ENCODE measurements at regions of chr9 and their contacts with region 1.

Region 1: GRCh38 chr9:108565651-108566378 is 290.0 kb downstream of the ACTL7B start:
- DNase-seq: peak in 1 of 2 experiments; percentile 63
- H3K4me3 ChIP-seq: no peak overlapping the region
- H3K4me3 Mint-ChIP-seq: no peak overlapping the region
- H3K27ac Mint-ChIP-seq: no peak overlapping the region
- H3K4me1 ChIP-seq: no peaks in the 10 kb centered on the region
- H3K4me1 Mint-ChIP-seq: no peaks in the 10 kb centered on the region
- H3K27me3 ChIP-seq: no peaks in the 10 kb centered on the region
- H3K27me3 Mint-ChIP-seq: peaks cover 6% of the 10 kb centered on the region
- CTCF ChIP-seq: peak; percentile 70 to 85

Region 2: GRCh38 chr9:107421947-107422793 is 1143.6 kb before region 1 on chr9:
- CTCF ChIA-PET with region 1: no interaction called
- POLR2A ChIA-PET with region 1: no interaction called
- intact Hi-C with region 1: loop called (anchors 1 kb)
- DNase-seq: peak; percentile 84 to 87
- H3K4me3 ChIP-seq: no peak overlapping the region
- H3K4me3 Mint-ChIP-seq: no peak overlapping the region
- H3K27ac Mint-ChIP-seq: no peak overlapping the region
- H3K4me1 ChIP-seq: no peaks in the 10 kb centered on the region
- H3K4me1 Mint-ChIP-seq: no peaks in the 10 kb centered on the region
- H3K27me3 ChIP-seq: no peaks in the 10 kb centered on the region
- H3K27me3 Mint-ChIP-seq: no peaks in the 10 kb centered on the region
- CTCF ChIP-seq: peak; percentile 80 to 87

Region 3: DNA sequence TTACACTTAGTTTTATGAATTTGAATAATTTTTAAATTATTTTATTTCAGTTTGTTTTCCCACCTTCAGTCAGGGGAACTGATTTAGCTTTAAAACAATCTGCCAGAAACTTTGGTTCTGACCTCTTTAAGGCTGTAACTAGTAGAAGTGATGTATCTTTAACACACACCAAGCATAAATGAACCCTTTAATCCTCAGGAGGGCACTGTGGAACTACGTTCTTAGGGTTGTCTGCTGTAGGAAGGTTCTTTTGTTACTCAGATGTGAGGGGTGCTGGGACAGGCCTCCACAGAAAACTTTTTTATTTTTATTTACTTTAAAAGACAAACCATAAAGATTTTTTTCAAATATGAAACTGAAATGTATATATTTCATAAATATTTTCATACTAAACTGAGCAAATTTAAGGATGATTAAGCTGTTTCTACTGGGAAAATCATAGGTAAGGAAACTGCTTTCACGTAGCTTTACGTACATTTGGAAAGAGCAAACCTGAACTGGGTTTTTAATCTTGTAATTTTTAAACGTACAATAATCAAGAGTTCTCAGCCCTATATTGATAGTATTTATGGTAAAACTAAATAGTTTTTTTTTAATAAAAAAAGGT is 1081.6 kb before region 1 on chr9:
- CTCF ChIA-PET with region 1: interaction called, 10 read pairs
- POLR2A ChIA-PET with region 1: no interaction called
- intact Hi-C with region 1: loop called (anchors 1 kb)
- DNase-seq: peak; percentile 52 to 65
- H3K4me3 ChIP-seq: no peak overlapping the region
- H3K4me3 Mint-ChIP-seq: no peak overlapping the region
- H3K27ac Mint-ChIP-seq: no peak overlapping the region
- H3K4me1 ChIP-seq: no peaks in the 10 kb centered on the region
- H3K4me1 Mint-ChIP-seq: no peaks in the 10 kb centered on the region
- H3K27me3 ChIP-seq: no peaks in the 10 kb centered on the region
- H3K27me3 Mint-ChIP-seq: no peaks in the 10 kb centered on the region
- CTCF ChIP-seq: peak; percentile 55 to 61

Region 4: DNA sequence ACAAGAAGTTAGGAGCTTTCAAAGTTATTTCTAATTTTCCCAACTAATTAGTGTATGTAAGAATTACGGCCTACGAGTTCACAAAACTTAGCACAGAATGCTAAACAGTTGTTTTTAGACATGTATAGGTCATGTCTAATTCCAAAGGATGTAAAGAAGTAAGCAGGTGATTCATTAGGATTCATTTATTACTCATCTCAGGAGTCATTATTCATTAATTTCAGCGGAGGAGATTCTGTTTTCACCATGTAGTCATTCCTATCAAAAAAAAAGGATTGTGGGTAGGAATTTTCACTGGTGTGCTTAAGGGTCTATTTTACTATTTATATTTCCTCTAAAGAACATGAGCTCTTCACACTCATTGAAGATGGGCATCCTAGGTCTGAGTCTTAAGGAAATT is 242.2 kb before region 1 on chr9:
- CTCF ChIA-PET with region 1: no interaction called
- POLR2A ChIA-PET with region 1: no interaction called
- intact Hi-C with region 1: no loop called
- DNase-seq: no peak
- H3K4me3 ChIP-seq: no peak overlapping the region
- H3K4me3 Mint-ChIP-seq: no peak overlapping the region
- H3K27ac Mint-ChIP-seq: no peak overlapping the region
- H3K4me1 ChIP-seq: no peaks in the 10 kb centered on the region
- H3K4me1 Mint-ChIP-seq: no peaks in the 10 kb centered on the region
- H3K27me3 ChIP-seq: no peaks in the 10 kb centered on the region
- H3K27me3 Mint-ChIP-seq: no peaks in the 10 kb centered on the region
- CTCF ChIP-seq: no peak

Region 5: DNA sequence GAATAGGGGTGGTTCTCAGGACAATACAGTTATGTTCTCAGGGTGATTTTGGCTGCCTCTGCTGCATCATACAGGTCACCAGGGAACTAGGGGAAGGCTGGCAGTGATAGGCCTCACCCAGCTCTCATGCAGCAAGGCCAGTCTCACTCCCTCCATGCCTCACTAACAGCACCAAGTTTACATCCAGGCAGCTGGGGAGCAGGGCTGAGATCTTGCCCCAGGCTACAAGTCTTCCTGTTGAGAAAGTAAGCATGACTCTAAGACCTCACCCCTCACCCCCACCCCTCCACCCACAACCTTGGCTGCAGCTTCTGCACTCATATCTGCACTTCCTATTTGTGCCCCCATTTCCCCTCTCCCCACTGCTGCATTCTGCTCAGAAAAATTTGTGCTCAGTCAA is 191.2 kb before region 1 on chr9:
- CTCF ChIA-PET with region 1: no interaction called
- POLR2A ChIA-PET with region 1: no interaction called
- intact Hi-C with region 1: no loop called
- DNase-seq: no peak
- H3K4me3 ChIP-seq: no peak overlapping the region
- H3K4me3 Mint-ChIP-seq: no peak overlapping the region
- H3K27ac Mint-ChIP-seq: no peak overlapping the region
- H3K4me1 ChIP-seq: peaks cover 20% of the 10 kb centered on the region
- H3K4me1 Mint-ChIP-seq: no peaks in the 10 kb centered on the region
- H3K27me3 ChIP-seq: no peaks in the 10 kb centered on the region
- H3K27me3 Mint-ChIP-seq: peaks cover 5% of the 10 kb centered on the region
- CTCF ChIP-seq: no peak

Region 6: GRCh38 chr9:108412755-108413154 is 153.1 kb before region 1 on chr9:
- CTCF ChIA-PET with region 1: interaction called, 10 read pairs
- POLR2A ChIA-PET with region 1: no interaction called
- intact Hi-C with region 1: loop called (anchors 1 kb)
- DNase-seq: peak; percentile 36 to 51
- H3K4me3 ChIP-seq: no peak overlapping the region
- H3K4me3 Mint-ChIP-seq: no peak overlapping the region
- H3K27ac Mint-ChIP-seq: no peak overlapping the region
- H3K4me1 ChIP-seq: no peaks in the 10 kb centered on the region
- H3K4me1 Mint-ChIP-seq: no peaks in the 10 kb centered on the region
- H3K27me3 ChIP-seq: no peaks in the 10 kb centered on the region
- H3K27me3 Mint-ChIP-seq: no peaks in the 10 kb centered on the region
- CTCF ChIP-seq: no peak

Region 7: DNA sequence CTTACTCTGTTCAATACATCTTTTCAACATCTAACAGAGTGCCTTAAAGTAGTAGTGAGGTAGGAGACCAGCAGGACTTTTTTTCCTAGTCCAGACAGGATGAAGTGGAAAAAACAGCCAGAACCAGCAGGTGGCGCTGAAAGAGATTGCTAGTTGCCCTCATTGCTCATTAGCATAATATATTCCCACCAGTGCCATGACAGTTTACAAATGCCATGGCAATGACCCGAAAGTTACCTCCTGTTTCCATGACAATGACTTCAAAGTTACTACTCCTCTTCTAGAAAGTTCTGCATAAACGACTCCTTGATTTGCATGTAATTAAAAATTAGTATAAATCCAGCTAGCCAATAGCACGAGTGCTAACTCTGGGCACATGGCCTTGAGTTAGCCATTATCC is 97.4 kb before region 1 on chr9:
- CTCF ChIA-PET with region 1: interaction called, 4 read pairs
- POLR2A ChIA-PET with region 1: no interaction called
- intact Hi-C with region 1: loop called (anchors 1 kb)
- DNase-seq: peak in 1 of 2 experiments; percentile 55
- H3K4me3 ChIP-seq: no peak overlapping the region
- H3K4me3 Mint-ChIP-seq: no peak overlapping the region
- H3K27ac Mint-ChIP-seq: no peak overlapping the region
- H3K4me1 ChIP-seq: no peaks in the 10 kb centered on the region
- H3K4me1 Mint-ChIP-seq: peaks cover 7% of the 10 kb centered on the region
- H3K27me3 ChIP-seq: no peaks in the 10 kb centered on the region; the same call in 1 of the 2 replicates
- H3K27me3 Mint-ChIP-seq: peaks cover 5% of the 10 kb centered on the region
- CTCF ChIP-seq: peak; percentile 44 to 64

Region 8: DNA sequence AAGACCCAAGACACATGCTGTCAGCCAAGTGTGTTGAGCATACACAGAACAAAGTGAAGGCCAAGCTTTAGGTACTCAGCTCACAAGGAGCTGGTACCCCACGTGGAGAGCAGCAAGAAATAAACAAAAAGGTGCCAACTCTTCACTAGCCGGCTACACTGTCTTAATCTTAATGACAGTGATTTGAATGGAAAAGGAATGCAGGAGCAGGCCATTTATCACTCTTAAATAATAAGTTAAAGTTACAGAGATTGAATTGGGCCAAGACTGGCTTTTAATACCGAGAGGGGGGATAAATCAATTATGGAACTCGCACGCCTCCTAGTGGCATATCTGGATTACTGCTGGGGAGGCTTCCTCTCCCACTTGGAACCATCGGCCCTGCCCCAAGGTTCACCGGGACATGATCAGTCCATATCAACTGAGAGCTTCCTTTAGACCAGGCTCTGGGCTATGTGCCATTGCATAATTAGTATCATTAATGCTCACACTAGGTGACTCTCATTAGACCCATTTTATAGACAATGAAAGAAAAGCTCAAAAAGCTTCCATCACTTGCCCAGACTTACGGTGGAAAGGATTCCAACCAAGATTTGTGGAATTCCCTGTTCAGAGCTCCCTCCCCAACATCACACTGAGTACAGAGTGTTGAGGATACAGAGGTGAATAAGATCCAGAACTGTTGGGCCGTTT is 196.0 kb after region 1 on chr9:
- CTCF ChIA-PET with region 1: no interaction called
- POLR2A ChIA-PET with region 1: no interaction called
- intact Hi-C with region 1: loop called (anchors 5 kb)
- DNase-seq: peak; percentile 48 to 57
- H3K4me3 ChIP-seq: no peak overlapping the region
- H3K4me3 Mint-ChIP-seq: no peak overlapping the region
- H3K27ac Mint-ChIP-seq: no peak overlapping the region
- H3K4me1 ChIP-seq: no peaks in the 10 kb centered on the region
- H3K4me1 Mint-ChIP-seq: no peaks in the 10 kb centered on the region
- H3K27me3 ChIP-seq: no peaks in the 10 kb centered on the region
- H3K27me3 Mint-ChIP-seq: peaks cover 10% of the 10 kb centered on the region
- CTCF ChIP-seq: peak; percentile 63 to 90

Region 9: GRCh38 chr9:108953983-108954574 is 388.3 kb after region 1 on chr9:
- CTCF ChIA-PET with region 1: no interaction called
- POLR2A ChIA-PET with region 1: no interaction called
- intact Hi-C with region 1: loop called (anchors 5 kb)
- DNase-seq: peak in 1 of 2 experiments; percentile 15
- H3K4me3 ChIP-seq: no peak overlapping the region
- H3K4me3 Mint-ChIP-seq: no peak overlapping the region
- H3K27ac Mint-ChIP-seq: no peak overlapping the region
- H3K4me1 ChIP-seq: no peaks in the 10 kb centered on the region
- H3K4me1 Mint-ChIP-seq: no peaks in the 10 kb centered on the region
- H3K27me3 ChIP-seq: no peaks in the 10 kb centered on the region
- H3K27me3 Mint-ChIP-seq: no peaks in the 10 kb centered on the region
- CTCF ChIP-seq: peak; percentile 53 to 62